Common myeloid progenitor, CD34-positive (primary cell): ENCODE measurements at regions of chr10 and their contacts with region 1.

Region 1: DNA sequence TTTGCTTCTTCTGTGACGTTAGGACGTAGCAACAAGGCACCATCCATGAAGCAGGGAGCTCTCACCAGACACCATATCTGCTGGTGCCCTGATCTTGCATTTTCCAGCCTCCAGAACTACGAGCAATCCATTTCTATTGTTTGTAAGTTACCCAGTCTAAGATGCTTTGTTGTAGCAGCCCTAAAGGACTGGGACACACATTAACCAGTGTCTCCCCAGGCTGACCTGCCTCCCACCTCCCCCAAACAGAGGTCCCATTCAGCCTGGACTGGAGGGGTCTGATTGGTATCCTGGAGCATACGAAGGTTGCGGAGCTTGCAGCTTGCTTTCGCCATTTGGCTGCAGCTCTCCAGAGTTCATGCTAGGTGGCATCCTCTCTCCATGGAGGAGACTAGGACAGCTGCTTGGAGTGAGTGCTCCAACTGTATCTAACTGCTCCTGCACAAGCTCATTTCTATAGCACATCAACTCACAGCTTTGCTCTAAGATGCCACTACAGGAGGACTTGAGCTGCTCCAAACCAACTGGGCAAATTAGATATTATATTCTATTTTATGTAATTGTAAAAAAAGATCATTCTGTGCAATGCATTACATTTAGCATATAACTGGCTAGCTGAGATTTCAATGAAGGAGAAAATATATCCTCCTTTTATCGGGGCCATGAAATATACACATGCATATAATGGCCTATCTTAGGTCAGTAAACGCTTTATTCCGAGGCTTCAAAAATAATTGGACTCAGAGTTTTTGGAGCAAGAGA is 8.0 kb upstream of the GRK5 start:
- DNase-seq: peak; percentile 76 to 87 (median 85)
- H3K4me3 ChIP-seq: no peak overlapping the region
- H3K27ac ChIP-seq: no peak overlapping the region
- H3K4me1 ChIP-seq: peaks cover 0 to 9% (median 5%) of the 10 kb centered on the region in 4 experiments
- H3K27me3 ChIP-seq: no peaks in the 10 kb centered on the region

Region 2: DNA sequence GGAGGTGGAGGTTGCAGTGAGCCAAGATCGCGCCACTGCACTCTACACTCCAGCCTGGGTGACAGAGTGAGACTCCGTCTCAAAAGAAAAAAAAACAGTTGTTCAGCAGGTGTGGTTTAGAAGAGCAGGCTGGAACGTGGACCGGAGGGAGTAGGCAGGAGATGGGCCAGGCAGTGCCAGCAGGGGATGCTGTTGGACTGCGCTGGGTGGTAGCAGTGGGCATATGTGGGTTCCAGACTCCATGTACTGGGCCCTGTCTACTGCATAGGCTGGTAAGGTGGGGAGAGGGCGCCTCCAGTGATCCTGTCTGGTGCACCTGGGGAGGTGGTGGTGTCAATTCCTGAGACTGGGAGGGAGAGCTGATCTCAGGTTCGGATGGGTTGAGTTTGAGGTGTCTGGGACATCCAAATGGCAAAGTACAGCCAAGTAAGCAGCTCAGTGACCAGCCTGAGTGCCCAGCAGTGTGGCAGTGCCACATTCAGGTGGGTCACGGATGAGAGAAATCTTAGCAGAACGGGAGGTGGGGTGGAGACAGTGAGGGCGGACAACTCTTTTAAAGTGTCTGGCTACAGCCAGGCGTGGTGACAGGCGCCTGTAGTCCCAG is 59.8 kb before region 1 on chr10:
- CTCF ChIA-PET with region 1: interaction called, 27 read pairs
- POLR2A ChIA-PET with region 1: no interaction called
- DNase-seq: peak; percentile 55 to 78 (median 70)
- H3K4me3 ChIP-seq: no peak overlapping the region
- H3K27ac ChIP-seq: no peak overlapping the region
- H3K4me1 ChIP-seq: peaks cover 9 to 31% (median 28%) of the 10 kb centered on the region in 4 experiments
- H3K27me3 ChIP-seq: no peaks in the 10 kb centered on the region

Region 3: DNA sequence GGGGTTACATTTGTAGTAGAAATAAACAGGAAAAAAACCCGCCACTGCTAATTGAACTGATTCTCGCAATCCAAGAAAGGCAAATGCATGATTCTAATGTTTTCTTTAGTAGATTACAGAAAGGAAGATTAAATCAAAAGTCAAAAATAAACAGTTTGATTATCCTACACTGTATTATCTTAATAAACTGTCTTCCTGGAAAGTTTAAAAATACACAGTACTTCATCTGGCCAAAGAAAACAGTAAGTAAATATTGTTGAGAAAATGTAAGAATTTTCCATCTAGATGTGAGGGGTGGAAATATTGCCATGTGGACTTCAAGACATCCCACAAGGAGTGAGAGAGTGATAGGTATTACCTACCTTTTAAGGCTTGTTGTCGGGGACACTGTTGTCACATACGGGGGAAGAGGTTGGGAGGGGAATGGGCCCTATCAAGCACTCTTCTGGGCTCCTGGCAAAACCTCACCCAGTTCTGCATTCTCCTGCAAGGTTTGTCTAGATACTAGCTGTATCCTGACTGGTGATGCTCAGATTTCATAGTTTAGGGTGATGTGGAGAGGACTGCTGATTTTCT is 25.8 kb after region 1 on chr10:
- CTCF ChIA-PET with region 1: no interaction called
- POLR2A ChIA-PET with region 1: no interaction called
- DNase-seq: no peak
- H3K4me3 ChIP-seq: no peak overlapping the region
- H3K27ac ChIP-seq: no peak overlapping the region
- H3K4me1 ChIP-seq: peaks cover 0 to 13% (median 7%) of the 10 kb centered on the region in 4 experiments
- H3K27me3 ChIP-seq: peaks cover 0 to 5% (median 2%) of the 10 kb centered on the region in 5 experiments

Region 4: DNA sequence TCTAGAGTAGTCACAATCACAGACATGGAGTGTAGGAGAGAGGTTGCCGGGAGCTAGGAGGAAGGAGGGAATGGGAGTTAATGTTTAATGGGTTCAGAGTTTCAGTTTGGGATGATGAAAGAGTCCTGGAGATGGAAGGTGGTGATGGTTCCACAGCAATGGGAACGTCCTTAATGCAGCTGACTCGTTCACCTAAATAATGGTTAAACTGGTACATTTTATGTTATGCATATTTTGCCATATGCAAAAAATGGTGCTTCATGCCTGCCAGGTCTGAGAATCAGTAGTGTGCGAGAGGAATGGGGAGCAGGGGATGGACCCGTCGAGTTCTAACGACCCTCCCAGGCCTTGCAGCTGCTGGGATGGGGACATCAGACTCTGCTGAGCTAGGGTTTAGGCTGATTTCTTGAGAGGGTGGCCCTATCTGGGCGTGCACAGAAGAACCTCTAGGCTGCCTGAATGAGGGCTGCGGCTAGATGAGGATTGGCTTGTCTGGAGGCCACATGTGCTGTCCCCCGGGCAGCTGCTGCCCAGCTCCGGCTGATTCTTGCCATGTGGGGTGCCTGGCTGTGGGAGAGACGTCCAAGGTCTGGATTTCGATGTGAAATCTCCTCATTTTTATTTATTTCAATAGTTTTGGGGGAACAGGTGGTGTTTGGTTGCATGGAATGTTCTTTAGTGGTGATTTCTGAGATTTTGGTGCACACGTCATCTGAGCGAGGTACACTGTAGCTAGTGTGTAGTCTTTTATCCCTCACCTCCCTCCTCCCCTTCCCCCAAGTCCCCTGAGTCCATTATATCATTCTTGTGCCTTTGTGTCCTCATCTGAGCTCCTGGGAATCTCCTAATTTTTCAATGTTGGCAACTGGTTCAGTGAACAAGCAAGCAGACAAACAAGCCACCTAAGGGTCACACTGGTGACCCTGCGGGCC is 123.9 kb after region 1 on chr10:
- CTCF ChIA-PET with region 1: interaction called, 10 read pairs
- POLR2A ChIA-PET with region 1: no interaction called
- DNase-seq: no peak
- H3K4me3 ChIP-seq: no peak overlapping the region
- H3K27ac ChIP-seq: no peak overlapping the region
- H3K4me1 ChIP-seq: peaks cover 0 to 7% (median 4%) of the 10 kb centered on the region in 4 experiments
- H3K27me3 ChIP-seq: peaks cover 0 to 87% (median 14%) of the 10 kb centered on the region in 5 experiments

Region 5: GRCh38 chr10:119416855-119417254 is 217.4 kb after region 1 on chr10:
- CTCF ChIA-PET with region 1: interaction called, 154 read pairs
- POLR2A ChIA-PET with region 1: no interaction called
- DNase-seq: peak; percentile 71 to 83 (median 75)
- H3K4me3 ChIP-seq: no peak overlapping the region
- H3K27ac ChIP-seq: no peak overlapping the region
- H3K4me1 ChIP-seq: peaks cover 0 to 10% (median 4%) of the 10 kb centered on the region in 4 experiments
- H3K27me3 ChIP-seq: peaks cover 0 to 8% (median 0%) of the 10 kb centered on the region in 5 experiments

Region 6: DNA sequence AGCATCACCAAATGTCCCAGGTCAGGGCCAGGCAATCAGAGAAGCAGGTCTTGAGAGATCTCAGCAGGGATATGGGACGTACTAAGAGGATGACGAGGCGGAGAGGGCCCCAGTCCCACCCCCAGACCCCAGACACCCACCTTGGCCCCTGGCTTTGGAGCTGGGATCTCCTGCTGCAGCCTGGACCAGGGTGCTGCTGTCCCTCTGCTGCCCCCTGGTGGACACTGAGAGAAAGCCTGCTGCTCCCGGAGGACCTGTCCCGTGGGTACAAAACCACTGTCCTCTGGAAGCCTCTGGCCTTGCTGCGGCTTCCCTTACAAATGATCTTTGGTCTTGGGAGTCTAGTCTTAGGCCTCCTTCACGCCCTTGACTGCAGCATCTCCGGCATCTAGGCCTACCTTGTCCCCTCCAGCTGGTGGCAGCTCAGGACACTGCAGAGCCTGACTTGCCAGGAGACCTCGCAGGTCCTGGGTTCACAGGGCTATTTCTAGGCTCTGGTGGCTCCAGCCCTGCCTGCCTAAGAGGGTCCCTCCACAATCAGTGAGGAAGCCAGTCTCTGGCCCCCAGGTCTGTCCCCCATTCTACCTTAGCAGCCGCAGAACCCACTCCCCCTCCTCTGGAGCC is 246.0 kb after region 1 on chr10:
- CTCF ChIA-PET with region 1: interaction called, 90 read pairs
- POLR2A ChIA-PET with region 1: interaction called, 3 read pairs
- DNase-seq: peak; percentile 74 to 86 (median 77)
- H3K4me3 ChIP-seq: no peak overlapping the region
- H3K27ac ChIP-seq: no peak overlapping the region
- H3K4me1 ChIP-seq: peaks cover 0 to 2% (median 0%) of the 10 kb centered on the region in 4 experiments
- H3K27me3 ChIP-seq: no peaks in the 10 kb centered on the region